A549 (cell line): ENCODE measurements at regions of chr1 and their contacts with region 1.

Region 1: GRCh38 chr1:176559878-176560277 is 96.9 kb downstream of the PAPPA2 start:
- DNase-seq: peak; percentile 55 to 56
- ATAC-seq: peak; percentile 90 to 98
- H3K4me3 ChIP-seq: no peak overlapping the region
- H3K27ac ChIP-seq: no peak overlapping the region
- H3K4me1 ChIP-seq: no peaks in the 10 kb centered on the region
- CTCF ChIP-seq: peak; percentile 85
- EP300 ChIP-seq: no peak
- POLR2A ChIP-seq: no peak
- RAD21 ChIP-seq: peak; percentile 82 to 93

Region 2: DNA sequence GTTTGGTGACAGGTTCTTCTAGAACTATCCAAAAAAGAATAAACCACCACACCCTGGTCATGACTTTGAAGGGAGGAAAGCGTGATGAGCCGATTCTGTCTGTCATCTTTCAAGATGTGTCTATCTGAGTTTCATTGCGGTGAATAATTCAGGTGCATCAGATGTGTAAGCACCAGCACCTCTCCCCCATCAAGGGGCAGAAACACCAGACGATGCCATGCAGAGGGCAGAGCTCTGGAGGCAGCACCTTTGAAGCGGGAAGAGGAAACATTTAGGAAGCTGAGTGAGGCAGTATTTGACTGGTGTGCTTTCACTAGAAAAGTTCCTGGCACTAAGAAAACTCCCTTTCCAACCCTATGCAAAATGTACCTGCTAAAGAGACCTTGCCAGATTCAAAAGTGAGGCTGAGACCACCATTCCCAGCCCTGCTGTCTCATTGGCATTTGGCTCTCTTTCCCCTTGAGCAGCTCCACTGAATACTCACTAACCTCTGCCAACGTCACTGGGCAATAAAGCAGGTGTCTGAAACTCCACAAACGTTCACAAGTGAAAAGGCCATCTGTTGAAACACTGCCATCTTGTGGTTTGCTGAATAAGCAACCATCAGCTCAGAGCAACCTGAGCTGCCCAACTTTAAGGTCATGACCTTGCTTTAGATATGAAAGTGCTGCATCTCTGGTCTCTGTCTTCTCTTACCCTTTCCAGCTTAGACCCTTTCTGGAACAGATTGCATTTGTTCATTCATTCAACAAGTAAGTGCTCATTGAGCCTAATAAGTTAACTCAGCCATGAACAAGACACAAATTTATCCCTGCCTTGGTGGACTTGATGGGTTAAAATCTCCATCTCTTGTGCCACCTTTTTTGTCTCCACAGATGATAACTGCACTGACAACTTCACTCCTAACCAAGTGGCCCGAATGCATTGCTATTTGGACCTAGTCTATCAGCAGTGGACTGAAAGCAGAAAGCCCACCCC is 131.7 kb after region 1 on chr1:
- CTCF ChIA-PET with region 1: interaction called, 68 read pairs
- POLR2A ChIA-PET with region 1: no interaction called
- DNase-seq: peak; percentile 18 to 65
- ATAC-seq: peak; percentile 75 to 87
- H3K4me3 ChIP-seq: no peak overlapping the region
- H3K27ac ChIP-seq: no peak overlapping the region
- H3K4me1 ChIP-seq: no peaks in the 10 kb centered on the region
- CTCF ChIP-seq: peak; percentile 64
- EP300 ChIP-seq: no peak
- POLR2A ChIP-seq: no peak
- RAD21 ChIP-seq: peak; percentile 49 to 61; a peak in 4 of 5 replicates

Region 3: DNA sequence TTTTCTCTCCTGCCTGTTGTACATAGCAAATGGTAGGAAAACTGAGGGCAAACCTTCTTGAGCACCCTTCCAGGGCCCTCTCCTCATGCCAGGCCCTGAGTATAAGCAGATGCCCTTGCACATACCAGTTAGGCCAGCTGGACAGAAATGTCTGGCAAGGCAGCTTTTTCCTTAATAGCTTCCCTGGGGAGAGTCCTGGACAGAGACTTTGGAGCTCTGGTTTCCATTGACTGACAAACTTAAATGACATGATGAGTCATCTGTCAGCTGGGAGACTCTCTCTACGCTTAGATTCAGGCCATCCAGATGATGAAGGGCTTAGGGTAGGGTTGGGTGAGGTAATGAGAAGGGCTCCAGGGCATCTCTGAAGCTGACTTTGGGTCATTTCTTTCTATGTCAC is 287.2 kb after region 1 on chr1:
- CTCF ChIA-PET with region 1: interaction called, 11 read pairs
- POLR2A ChIA-PET with region 1: no interaction called
- DNase-seq: no peak
- ATAC-seq: no peak
- H3K4me3 ChIP-seq: no peak overlapping the region
- H3K27ac ChIP-seq: no peak overlapping the region
- H3K4me1 ChIP-seq: no peaks in the 10 kb centered on the region
- CTCF ChIP-seq: no peak
- EP300 ChIP-seq: no peak
- POLR2A ChIP-seq: no peak
- RAD21 ChIP-seq: no peak

Region 4: GRCh38 chr1:176880954-176881595 is 321.2 kb after region 1 on chr1:
- CTCF ChIA-PET with region 1: interaction called, 16 read pairs
- POLR2A ChIA-PET with region 1: no interaction called
- DNase-seq: peak; percentile 66 to 69
- ATAC-seq: peak; percentile 88 to 96; a peak in 5 of 6 replicates
- H3K4me3 ChIP-seq: no peak overlapping the region
- H3K27ac ChIP-seq: no peak overlapping the region
- H3K4me1 ChIP-seq: no peaks in the 10 kb centered on the region
- CTCF ChIP-seq: peak; percentile 70
- EP300 ChIP-seq: no peak
- POLR2A ChIP-seq: no peak
- RAD21 ChIP-seq: peak; percentile 76 to 83